CD4-positive, alpha-beta T cell (primary cell): ENCODE measurements at regions of chr15 and their contacts with region 1.

Region 1: GRCh38 chr15:70504299-70504951 is 258.9 kb downstream of the UACA start:
- DNase-seq: peak in 5 of 14 experiments; percentile 10 to 71 (median 54)
- ATAC-seq: peak; percentile 27
- H3K4me3 ChIP-seq: no peak overlapping the region
- H3K4me3 Mint-ChIP-seq: peak overlapping the region; percentile 48
- H3K27ac ChIP-seq: no peak overlapping the region
- H3K27ac Mint-ChIP-seq: no peak overlapping the region
- H3K4me1 ChIP-seq: peaks cover 70% of the 10 kb centered on the region
- H3K4me1 Mint-ChIP-seq: peaks cover 70% of the 10 kb centered on the region
- H3K27me3 ChIP-seq: no peaks in the 10 kb centered on the region
- H3K27me3 Mint-ChIP-seq: no peaks in the 10 kb centered on the region
- CTCF ChIP-seq: no peak

Region 2: GRCh38 chr15:70451821-70452653 is 52.4 kb before region 1 on chr15:
- CTCF ChIA-PET with region 1: no interaction called
- POLR2A ChIA-PET with region 1: no interaction called
- intact Hi-C with region 1: loop called in 1 of 2 experiments (anchors 1 kb)
- DNase-seq: peak in 12 of 14 experiments; percentile 7 to 70 (median 46)
- ATAC-seq: peak; percentile 41
- H3K4me3 ChIP-seq: no peak overlapping the region
- H3K4me3 Mint-ChIP-seq: no peak overlapping the region
- H3K27ac ChIP-seq: no peak overlapping the region
- H3K27ac Mint-ChIP-seq: no peak overlapping the region
- H3K4me1 ChIP-seq: peaks cover 40% of the 10 kb centered on the region
- H3K4me1 Mint-ChIP-seq: peaks cover 50% of the 10 kb centered on the region
- H3K27me3 ChIP-seq: no peaks in the 10 kb centered on the region
- H3K27me3 Mint-ChIP-seq: peaks cover 4% of the 10 kb centered on the region
- CTCF ChIP-seq: no peak

Region 3: GRCh38 chr15:70528270-70528706 is 23.9 kb after region 1 on chr15:
- CTCF ChIA-PET with region 1: no interaction called
- POLR2A ChIA-PET with region 1: interaction called, 19 read pairs
- intact Hi-C with region 1: no loop called
- DNase-seq: peak; percentile 33 to 91 (median 44)
- ATAC-seq: peak; percentile 89
- H3K4me3 ChIP-seq: peak overlapping the region; percentile 24
- H3K4me3 Mint-ChIP-seq: peak overlapping the region; percentile 71
- H3K27ac ChIP-seq: peak overlapping the region; percentile 14 to 66
- H3K27ac Mint-ChIP-seq: peak overlapping the region; percentile 89
- H3K4me1 ChIP-seq: peaks cover 71% of the 10 kb centered on the region
- H3K4me1 Mint-ChIP-seq: peaks cover 83% of the 10 kb centered on the region
- H3K27me3 ChIP-seq: no peaks in the 10 kb centered on the region
- H3K27me3 Mint-ChIP-seq: no peaks in the 10 kb centered on the region
- CTCF ChIP-seq: no peak